ENCODE measurements at regions of chr1 and their contacts with region 1.

Region 1: DNA sequence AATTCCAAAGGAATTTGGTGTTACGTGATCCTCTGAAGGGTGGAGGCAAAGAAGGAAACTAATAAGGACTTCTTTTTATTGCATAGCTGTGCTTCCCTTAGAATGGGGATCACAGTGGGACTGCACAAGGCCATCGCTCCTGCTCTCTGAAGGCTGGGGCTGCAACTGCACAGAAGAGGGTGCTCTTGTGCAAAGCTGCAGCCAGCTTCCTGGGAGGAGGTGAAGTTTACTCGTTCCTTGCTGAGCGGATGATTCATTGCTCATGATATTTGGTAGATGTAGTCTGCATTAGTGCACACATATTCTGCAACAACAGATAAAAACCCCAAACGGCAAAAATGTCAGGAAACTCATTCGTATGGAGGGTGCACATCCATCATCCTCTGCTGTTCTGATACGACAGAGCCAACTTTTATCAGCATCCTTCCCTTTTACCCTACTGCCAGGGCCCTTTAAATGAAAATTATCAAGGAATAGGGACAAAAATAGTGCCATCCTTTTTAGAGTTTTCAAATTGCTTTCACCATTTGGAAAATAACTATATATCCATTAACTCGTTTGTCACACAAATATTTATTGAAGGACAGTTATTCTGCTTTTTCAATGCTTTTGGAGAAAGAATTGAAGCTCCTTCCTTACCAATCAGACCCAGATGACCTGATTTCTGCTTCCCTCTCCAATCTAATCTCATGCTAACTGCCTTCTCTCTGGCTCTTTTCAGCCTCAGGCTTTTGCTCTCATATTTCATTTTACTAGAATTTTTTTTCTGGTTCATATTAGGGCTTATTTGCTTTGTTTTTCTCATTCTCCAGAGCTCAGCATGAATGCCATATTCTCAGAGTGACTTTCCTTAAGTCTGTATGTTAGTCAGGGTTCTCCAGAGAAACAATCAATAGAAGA is 263.6 kb downstream of the DUSP10 start:
- DNase-seq: peak; percentile 7 to 46 (median 31)
- ATAC-seq: peak; percentile 82
- H3K4me3 ChIP-seq: no peak overlapping the region
- H3K4me3 Mint-ChIP-seq: no peak overlapping the region
- H3K27ac ChIP-seq: no peak overlapping the region
- H3K27ac Mint-ChIP-seq: no peak overlapping the region
- H3K4me1 ChIP-seq: no peaks in the 10 kb centered on the region
- H3K4me1 Mint-ChIP-seq: peaks cover 0 to 5% (median 0%) of the 10 kb centered on the region in 7 donors
- H3K27me3 ChIP-seq: no peaks in the 10 kb centered on the region
- H3K27me3 Mint-ChIP-seq: peaks cover 0 to 15% (median 4%) of the 10 kb centered on the region in 5 donors

Region 2: GRCh38 chr1:221335161-221336101 is 142.9 kb before region 1 on chr1:
- CTCF ChIA-PET with region 1: no interaction called
- POLR2A ChIA-PET with region 1: no interaction called
- intact Hi-C with region 1: no loop called
- DNase-seq: no peak
- ATAC-seq: no peak
- H3K4me3 ChIP-seq: no peak overlapping the region
- H3K4me3 Mint-ChIP-seq: no peak overlapping the region
- H3K27ac ChIP-seq: no peak overlapping the region
- H3K27ac Mint-ChIP-seq: no peak overlapping the region
- H3K4me1 ChIP-seq: no peaks in the 10 kb centered on the region
- H3K4me1 Mint-ChIP-seq: peaks cover 0 to 4% (median 0%) of the 10 kb centered on the region in 7 donors
- H3K27me3 ChIP-seq: no peaks in the 10 kb centered on the region
- H3K27me3 Mint-ChIP-seq: peaks cover 0 to 36% (median 20%) of the 10 kb centered on the region in 5 donors

Region 3: DNA sequence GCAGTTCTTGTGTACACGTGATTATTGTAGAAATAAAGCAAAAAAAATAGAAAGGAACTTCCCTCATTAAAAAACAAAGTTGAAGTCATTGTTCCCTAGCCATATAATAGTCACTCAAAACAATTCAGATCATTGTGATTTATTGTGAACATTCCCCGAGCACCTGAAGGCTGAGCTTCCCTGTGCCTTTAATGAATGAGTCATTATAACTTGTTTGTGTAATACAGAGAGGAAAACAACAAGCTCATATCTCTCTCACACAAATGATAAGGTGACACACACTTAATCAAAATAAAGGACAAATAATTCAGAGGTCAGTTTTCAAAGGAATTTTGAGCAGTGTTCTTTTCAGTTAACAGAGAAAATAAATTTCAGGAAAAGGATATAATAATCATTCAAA is 62.7 kb before region 1 on chr1:
- CTCF ChIA-PET with region 1: no interaction called
- POLR2A ChIA-PET with region 1: no interaction called
- intact Hi-C with region 1: no loop called
- DNase-seq: no peak
- ATAC-seq: no peak
- H3K4me3 ChIP-seq: no peak overlapping the region
- H3K4me3 Mint-ChIP-seq: no peak overlapping the region
- H3K27ac ChIP-seq: no peak overlapping the region
- H3K27ac Mint-ChIP-seq: no peak overlapping the region
- H3K4me1 ChIP-seq: no peaks in the 10 kb centered on the region
- H3K4me1 Mint-ChIP-seq: no peaks in the 10 kb centered on the region
- H3K27me3 ChIP-seq: no peaks in the 10 kb centered on the region
- H3K27me3 Mint-ChIP-seq: peaks cover 2 to 31% (median 24%) of the 10 kb centered on the region in 5 donors

Region 4: GRCh38 chr1:221886743-221887413 is 408.6 kb after region 1 on chr1:
- CTCF ChIA-PET with region 1: no interaction called
- POLR2A ChIA-PET with region 1: no interaction called
- intact Hi-C with region 1: loop called in 1 of 2 experiments (anchors 5 kb)
- DNase-seq: no peak
- ATAC-seq: no peak
- H3K4me3 ChIP-seq: no peak overlapping the region
- H3K4me3 Mint-ChIP-seq: no peak overlapping the region
- H3K27ac ChIP-seq: no peak overlapping the region
- H3K27ac Mint-ChIP-seq: no peak overlapping the region
- H3K4me1 ChIP-seq: no peaks in the 10 kb centered on the region
- H3K4me1 Mint-ChIP-seq: peaks cover 0 to 5% (median 0%) of the 10 kb centered on the region in 7 donors
- H3K27me3 ChIP-seq: no peaks in the 10 kb centered on the region
- H3K27me3 Mint-ChIP-seq: peaks cover 0 to 27% (median 12%) of the 10 kb centered on the region in 5 donors

Region 5: DNA sequence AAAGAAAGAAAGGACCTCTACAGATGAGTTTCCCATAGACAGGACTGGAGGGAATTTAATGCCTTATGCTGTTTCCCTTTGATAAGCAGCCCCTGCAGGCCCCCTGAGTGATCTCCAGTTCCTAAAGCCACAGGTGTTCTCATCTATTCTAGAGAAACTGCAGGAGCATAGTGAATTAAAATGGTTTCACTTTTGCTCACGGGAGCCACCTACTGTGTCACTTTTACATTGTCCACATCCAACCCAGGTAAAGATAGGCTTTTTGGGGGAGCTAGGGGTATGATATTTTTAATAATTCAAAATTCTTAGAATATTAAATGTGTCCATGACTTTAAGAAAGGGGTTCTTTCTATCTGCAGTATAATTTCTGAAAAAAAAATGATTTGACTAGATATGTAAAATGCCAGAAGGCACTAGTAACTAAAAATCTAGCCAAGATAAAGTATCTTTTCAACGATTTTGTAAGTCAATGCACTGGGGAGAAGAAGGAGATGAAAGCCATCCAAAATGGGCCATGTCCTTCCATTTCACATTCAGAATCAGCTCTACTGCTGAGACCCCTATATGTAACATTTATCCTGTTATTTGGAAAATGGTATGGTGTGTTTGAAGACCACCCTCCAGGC is 530.9 kb after region 1 on chr1:
- CTCF ChIA-PET with region 1: interaction called, 5 read pairs
- POLR2A ChIA-PET with region 1: no interaction called
- intact Hi-C with region 1: loop called (anchors 1 kb)
- DNase-seq: peak in 6 of 9 donors; percentile 1 to 36 (median 27)
- ATAC-seq: peak; percentile 67
- H3K4me3 ChIP-seq: no peak overlapping the region
- H3K4me3 Mint-ChIP-seq: peak overlapping the region in 5 of 10 donors; percentile 6 to 53 (median 31)
- H3K27ac ChIP-seq: no peak overlapping the region
- H3K27ac Mint-ChIP-seq: peak overlapping the region in 1 of 9 donors; percentile 31
- H3K4me1 ChIP-seq: no peaks in the 10 kb centered on the region
- H3K4me1 Mint-ChIP-seq: peaks cover 0 to 4% (median 0%) of the 10 kb centered on the region in 7 donors
- H3K27me3 ChIP-seq: no peaks in the 10 kb centered on the region
- H3K27me3 Mint-ChIP-seq: peaks cover 0 to 25% (median 0%) of the 10 kb centered on the region in 5 donors

Region 6: DNA sequence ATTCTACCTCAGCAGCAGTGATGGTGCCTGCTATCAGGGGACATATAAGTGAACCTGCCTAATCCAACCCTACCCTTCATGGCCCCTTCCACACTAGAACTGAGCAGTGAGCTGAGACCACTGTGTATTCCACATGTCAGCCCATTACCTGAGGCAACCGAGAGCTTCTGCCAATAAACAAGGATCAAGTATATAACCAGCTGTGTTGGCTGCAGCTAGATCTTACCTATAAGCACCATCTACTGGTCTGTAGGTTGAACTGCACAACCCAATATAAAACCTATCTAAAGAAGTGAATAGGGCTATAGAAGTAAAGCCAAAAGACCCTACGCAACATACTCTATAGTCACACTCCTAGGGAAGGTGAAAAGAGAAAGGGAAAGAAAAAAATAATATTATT is 692.7 kb after region 1 on chr1:
- CTCF ChIA-PET with region 1: no interaction called
- POLR2A ChIA-PET with region 1: no interaction called
- intact Hi-C with region 1: loop called in 1 of 2 experiments (anchors 2 kb)
- DNase-seq: no peak
- ATAC-seq: peak; percentile 46
- H3K4me3 ChIP-seq: no peak overlapping the region
- H3K4me3 Mint-ChIP-seq: no peak overlapping the region
- H3K27ac ChIP-seq: no peak overlapping the region
- H3K27ac Mint-ChIP-seq: no peak overlapping the region
- H3K4me1 ChIP-seq: no peaks in the 10 kb centered on the region
- H3K4me1 Mint-ChIP-seq: peaks cover 0 to 2% (median 0%) of the 10 kb centered on the region in 7 donors
- H3K27me3 ChIP-seq: no peaks in the 10 kb centered on the region
- H3K27me3 Mint-ChIP-seq: peaks cover 0 to 6% (median under 1%) of the 10 kb centered on the region in 5 donors